HCT116 (cell line): ENCODE measurements at regions of chr12 and their contacts with region 1.

Region 1: DNA sequence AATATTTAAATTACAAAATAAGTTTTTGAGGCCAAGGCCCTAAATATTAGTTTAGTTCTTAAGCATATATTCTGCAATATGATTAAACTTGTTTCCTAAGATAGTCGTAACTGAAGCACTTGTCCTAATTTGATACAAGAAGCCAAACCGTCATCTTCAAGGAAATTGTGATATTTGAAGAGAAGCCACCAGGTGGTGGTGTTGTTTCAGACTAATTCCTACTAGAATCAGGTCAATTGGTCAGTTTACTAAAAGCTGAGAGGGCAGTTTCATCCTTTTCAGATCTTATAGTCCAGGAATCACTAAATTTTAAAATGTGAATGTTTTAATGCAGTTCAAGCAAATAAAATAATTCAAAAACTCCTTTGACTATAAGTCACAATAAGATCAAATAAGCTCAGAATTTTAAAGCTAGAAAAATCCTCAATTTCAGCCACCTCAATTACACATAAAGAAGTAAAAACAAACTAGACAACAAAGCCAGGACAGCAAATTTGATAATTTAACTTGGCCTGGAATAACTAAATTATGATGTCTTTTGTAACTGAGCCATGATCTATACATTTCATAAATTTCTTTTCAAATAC is 7.1 kb upstream of the ARL1 start:
- DNase-seq: peak; percentile 73
- ATAC-seq: peak; percentile 77
- H3K4me3 ChIP-seq: no peak overlapping the region
- H3K27ac ChIP-seq: no peak overlapping the region
- H3K4me1 ChIP-seq: peaks cover 15 to 20% of the 10 kb centered on the region in 2 experiments
- H3K27me3 ChIP-seq: no peaks in the 10 kb centered on the region
- CTCF ChIP-seq: peak; percentile 54 to 80 (median 71)
- POLR2A ChIP-seq: no peak
- RAD21 ChIP-seq: peak; percentile 91

Region 2: DNA sequence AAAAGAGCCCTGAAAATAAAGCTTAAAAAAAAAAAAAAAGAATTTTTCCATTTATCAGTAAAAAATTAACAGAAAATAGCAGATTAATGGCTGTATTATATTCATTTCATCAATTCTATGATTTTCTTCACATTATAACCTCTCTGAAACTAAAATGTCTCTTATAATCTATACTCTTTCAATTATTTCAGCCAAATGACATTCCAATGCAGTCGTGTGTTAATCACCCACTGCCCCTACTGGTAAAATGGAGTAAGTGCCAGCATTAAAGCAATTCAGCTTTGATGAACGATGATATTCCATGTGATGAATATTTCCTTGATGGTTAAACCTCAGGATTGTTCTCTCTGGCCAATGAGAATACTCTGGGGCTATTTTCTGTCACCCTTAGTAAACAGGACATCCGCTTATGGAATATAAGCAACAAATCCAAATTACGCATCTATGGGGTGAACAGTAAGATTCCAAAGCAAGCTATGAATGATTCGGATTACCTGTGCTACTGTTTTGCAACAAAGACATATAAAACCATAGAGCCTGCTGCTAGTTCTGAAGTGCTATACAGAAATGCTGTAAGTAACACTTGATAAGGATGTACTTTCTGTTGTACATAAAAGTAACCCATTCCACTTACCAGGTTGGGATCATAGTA is 344.9 kb after region 1 on chr12:
- CTCF ChIA-PET with region 1: interaction called, 11 read pairs
- POLR2A ChIA-PET with region 1: no interaction called
- RAD21 ChIA-PET with region 1: no interaction called
- intact Hi-C with region 1: loop called (anchors 1 kb)
- DNase-seq: peak; percentile 13
- ATAC-seq: peak; percentile 80
- H3K4me3 ChIP-seq: no peak overlapping the region
- H3K27ac ChIP-seq: no peak overlapping the region
- H3K4me1 ChIP-seq: no peaks in the 10 kb centered on the region
- H3K27me3 ChIP-seq: no peaks in the 10 kb centered on the region
- CTCF ChIP-seq: peak; percentile 68 to 78 (median 72)
- POLR2A ChIP-seq: no peak
- RAD21 ChIP-seq: peak; percentile 75

Region 3: GRCh38 chr12:101830367-101831325 is 416.0 kb after region 1 on chr12 and contains the start of gene GNPTAB:
- CTCF ChIA-PET with region 1: interaction called, 3 read pairs
- POLR2A ChIA-PET with region 1: no interaction called
- RAD21 ChIA-PET with region 1: no interaction called
- intact Hi-C with region 1: loop called (anchors 2 kb)
- DNase-seq: peak; percentile 82
- ATAC-seq: peak; percentile 95
- H3K4me3 ChIP-seq: peak within 1 kb of the TSS; percentile 73 to 84
- H3K27ac ChIP-seq: peak within 1 kb of the TSS; percentile 74
- H3K4me1 ChIP-seq: peaks cover 5 to 9% of the 10 kb centered on the region in 2 experiments; a peak in 2 of 4 replicates
- H3K27me3 ChIP-seq: no peaks in the 10 kb centered on the region
- CTCF ChIP-seq: peak; percentile 57 to 64 (median 60); a peak in 5 of 6 replicates
- POLR2A ChIP-seq: peak; percentile 51
- RAD21 ChIP-seq: peak; percentile 64
- total RNA-seq, gene GNPTAB: 41.4 TPM

Region 4: DNA sequence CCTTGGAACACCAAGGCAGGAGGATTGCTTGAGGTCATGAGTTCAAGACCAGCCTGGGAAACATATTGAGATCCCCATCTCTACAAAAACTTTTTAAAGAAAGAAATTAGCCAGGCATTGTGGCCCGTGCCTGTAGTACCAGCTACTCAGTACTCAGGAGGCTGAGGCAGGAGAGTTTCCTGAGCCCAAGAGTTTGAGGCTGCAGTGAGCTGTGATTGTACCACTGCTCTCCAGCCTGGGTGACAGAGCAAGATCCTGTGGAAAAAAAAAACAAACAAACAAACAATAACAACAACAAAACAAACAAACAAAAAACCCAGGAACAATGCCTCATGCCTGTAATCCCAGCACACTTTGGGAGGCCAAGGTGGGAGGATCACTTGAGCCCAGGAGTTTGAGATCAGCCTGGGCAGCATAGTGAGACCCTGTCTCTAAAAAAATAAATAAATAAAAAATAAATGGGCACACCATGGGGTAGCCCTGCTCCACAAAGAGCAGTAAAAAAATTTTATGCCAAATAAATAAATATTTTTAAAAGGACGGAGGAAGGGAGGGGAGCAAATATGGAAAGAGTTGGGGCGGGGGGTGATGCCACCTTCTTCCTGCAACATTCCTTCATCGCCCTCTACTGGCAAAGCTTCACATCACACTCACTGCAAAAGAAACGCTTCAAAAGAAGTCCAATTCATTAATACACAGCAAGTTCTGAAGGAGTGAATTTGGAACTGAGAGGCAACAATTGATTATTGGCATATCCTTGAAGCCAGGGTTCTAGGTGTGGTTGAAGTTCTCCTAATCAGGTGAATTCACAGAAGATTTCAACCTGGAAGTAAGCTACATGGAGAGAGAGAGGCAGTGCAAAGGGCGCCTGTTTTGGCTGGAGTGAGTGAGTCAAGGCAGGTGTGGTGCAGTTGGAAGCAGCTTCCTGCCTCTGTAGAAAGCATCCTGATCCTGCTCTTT is 425.0 kb after region 1 on chr12:
- CTCF ChIA-PET with region 1: interaction called, 5 read pairs
- POLR2A ChIA-PET with region 1: no interaction called
- RAD21 ChIA-PET with region 1: interaction called in 1 of 2 experiments, 3 read pairs
- intact Hi-C with region 1: loop called (anchors 2 kb)
- DNase-seq: peak; percentile 48
- ATAC-seq: peak; percentile 84
- H3K4me3 ChIP-seq: no peak overlapping the region
- H3K27ac ChIP-seq: no peak overlapping the region
- H3K4me1 ChIP-seq: peaks cover 0 to 6% of the 10 kb centered on the region in 2 experiments; a peak in 3 of 4 replicates
- H3K27me3 ChIP-seq: no peaks in the 10 kb centered on the region
- CTCF ChIP-seq: peak; percentile 67 to 89 (median 82)
- POLR2A ChIP-seq: no peak
- RAD21 ChIP-seq: peak; percentile 81

Region 5: DNA sequence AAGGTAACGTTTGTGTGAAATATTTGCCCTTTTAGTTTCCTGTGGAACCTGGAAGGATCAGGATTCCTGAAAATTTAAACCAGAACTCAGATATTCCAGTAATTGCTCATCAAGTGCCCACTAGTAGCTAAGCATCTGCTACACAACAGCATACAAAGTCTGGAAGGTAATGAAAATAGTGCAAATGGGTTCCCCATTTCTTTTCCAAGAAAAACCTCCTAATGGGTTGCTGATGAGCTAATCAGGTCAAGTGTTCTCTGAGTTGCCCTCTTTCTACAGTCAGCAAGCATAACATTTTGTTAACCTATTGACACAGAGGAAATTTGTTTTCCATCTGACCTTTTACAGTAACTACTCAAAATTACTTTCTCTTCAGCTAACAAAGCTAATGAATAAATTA is 866.6 kb after region 1 on chr12:
- CTCF ChIA-PET with region 1: no interaction called
- POLR2A ChIA-PET with region 1: no interaction called
- RAD21 ChIA-PET with region 1: no interaction called
- intact Hi-C with region 1: no loop called
- DNase-seq: no peak
- ATAC-seq: no peak
- H3K4me3 ChIP-seq: no peak overlapping the region
- H3K27ac ChIP-seq: no peak overlapping the region
- H3K4me1 ChIP-seq: no peaks in the 10 kb centered on the region
- H3K27me3 ChIP-seq: no peaks in the 10 kb centered on the region
- CTCF ChIP-seq: no peak
- POLR2A ChIP-seq: no peak
- RAD21 ChIP-seq: no peak

Region 6: DNA sequence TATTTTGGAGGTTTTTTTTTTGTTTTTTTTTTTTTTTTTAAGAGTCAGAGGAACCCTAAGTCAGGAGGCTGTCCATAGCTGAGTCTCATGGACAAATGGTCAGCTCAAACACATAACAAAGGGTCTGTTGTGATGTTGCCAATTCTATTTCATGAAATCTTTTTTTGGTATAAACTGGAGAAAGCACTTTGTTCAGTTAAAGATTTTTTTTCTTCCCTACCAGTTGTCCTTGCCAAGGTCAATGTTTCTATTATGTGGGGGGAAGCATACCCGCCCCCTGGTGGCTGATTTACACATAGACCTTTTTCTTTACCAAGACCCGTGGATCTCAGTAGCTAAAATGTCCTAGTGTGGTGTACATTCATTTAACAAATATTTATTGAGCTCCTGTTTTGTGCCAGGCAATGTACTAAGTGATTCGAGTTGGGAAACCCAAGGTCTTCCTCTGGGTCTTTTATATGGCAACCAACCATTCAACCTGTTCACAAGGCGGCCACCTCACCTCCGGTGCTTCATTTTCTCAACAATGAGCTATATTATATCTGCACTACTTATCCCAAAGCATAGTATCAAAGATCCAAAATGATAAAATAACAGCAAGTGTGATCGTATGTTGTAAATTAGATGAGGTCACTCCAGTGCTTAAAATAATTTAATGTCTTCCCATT is 1288.0 kb after region 1 on chr12:
- CTCF ChIA-PET with region 1: no interaction called
- POLR2A ChIA-PET with region 1: no interaction called
- RAD21 ChIA-PET with region 1: no interaction called
- intact Hi-C with region 1: loop called (anchors 10 kb)
- DNase-seq: peak; percentile 36
- ATAC-seq: peak; percentile 78
- H3K4me3 ChIP-seq: no peak overlapping the region
- H3K27ac ChIP-seq: no peak overlapping the region
- H3K4me1 ChIP-seq: no peaks in the 10 kb centered on the region
- H3K27me3 ChIP-seq: peaks cover 9% of the 10 kb centered on the region
- CTCF ChIP-seq: peak; percentile 55 to 81 (median 65); a peak in 5 of 6 replicates
- POLR2A ChIP-seq: no peak
- RAD21 ChIP-seq: peak; percentile 57

Region 7: GRCh38 chr12:102879144-102879763 is 1464.6 kb after region 1 on chr12:
- CTCF ChIA-PET with region 1: no interaction called
- POLR2A ChIA-PET with region 1: no interaction called
- RAD21 ChIA-PET with region 1: no interaction called
- intact Hi-C with region 1: loop called (anchors 10 kb)
- DNase-seq: peak; percentile 76
- ATAC-seq: peak; percentile 88
- H3K4me3 ChIP-seq: no peak overlapping the region
- H3K27ac ChIP-seq: no peak overlapping the region
- H3K4me1 ChIP-seq: 0 out of 4 replicates have a peak, but pooled peaks cover 0 to 3% of the 10 kb centered on the region in 2 experiments
- H3K27me3 ChIP-seq: peaks cover 13% of the 10 kb centered on the region; the same call in 1 of the 2 replicates
- CTCF ChIP-seq: peak; percentile 54 to 95 (median 62)
- POLR2A ChIP-seq: no peak
- RAD21 ChIP-seq: peak; percentile 85